Dendritic cell treated with granulocyte-macrophage colony-stimulating factor and Interleukin-4, amounts not matched to agents 40 ng/mL and 50 ng/mL, for 4 days (primary cell): ENCODE measurements at regions of chr5 and their contacts with region 1.

Region 1: GRCh38 chr5:73448463-73449136 is at the start of gene FOXD1:
- H3K4me3 Mint-ChIP-seq: peak within 1 kb of the TSS; percentile 82
- H3K27ac Mint-ChIP-seq: no peak within 1 kb of the TSS
- H3K4me1 Mint-ChIP-seq: peaks cover 39% of the 10 kb centered on the region
- H3K27me3 Mint-ChIP-seq: peaks cover 82% of the 10 kb centered on the region

Region 2: DNA sequence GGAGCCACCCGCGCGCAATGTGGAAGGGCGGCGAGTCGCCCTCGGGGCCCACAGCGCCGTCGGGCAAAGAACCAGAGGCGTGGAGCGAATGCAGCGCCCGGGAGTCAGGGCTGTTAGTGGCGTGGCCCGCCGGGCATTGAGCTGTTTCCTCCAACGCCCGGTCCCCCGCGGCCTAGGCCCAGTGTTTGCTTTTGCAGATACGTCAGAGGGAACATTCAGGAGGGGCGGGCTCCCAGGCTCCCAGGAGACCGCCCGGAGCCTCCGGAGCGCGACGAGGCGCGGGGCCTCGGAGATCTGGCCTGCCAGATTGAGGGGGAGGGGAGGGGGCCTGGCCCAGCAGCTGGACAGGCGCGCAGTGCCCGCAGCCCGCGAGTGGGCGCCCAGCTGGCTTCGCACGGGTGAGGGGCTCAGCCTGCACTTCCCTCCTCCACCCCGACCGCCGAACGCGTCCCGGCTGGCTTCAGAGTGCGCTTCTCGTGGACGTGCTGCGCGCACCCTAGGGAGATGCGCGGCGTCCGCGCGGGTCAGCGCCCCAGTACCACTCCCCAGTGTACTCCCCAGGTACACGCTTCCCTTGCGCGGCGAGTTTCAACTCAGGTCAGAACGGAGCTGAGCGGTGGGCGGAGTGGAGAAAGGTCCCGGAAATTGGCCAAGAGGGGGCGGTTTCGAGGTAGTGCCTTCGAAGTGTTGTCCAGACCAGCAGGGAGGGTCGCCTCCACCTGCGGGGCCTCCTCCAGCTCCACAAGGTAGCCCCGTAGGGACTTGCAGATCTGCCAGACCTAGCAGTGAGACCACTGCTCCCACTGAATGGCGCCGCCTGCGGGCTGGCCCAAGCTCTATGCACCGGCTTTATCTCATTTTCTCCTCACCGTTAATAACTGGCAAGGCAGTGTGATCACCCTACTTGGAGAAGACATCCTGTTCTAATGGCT is 145.2 kb before region 1 on chr5:
- intact Hi-C with region 1: loop called (anchors 10 kb)
- H3K4me3 Mint-ChIP-seq: no peak overlapping the region
- H3K27ac Mint-ChIP-seq: no peak overlapping the region
- H3K4me1 Mint-ChIP-seq: peaks cover 12% of the 10 kb centered on the region
- H3K27me3 Mint-ChIP-seq: peaks cover 96% of the 10 kb centered on the region

Region 3: GRCh38 chr5:73412597-73412988 is 36.0 kb before region 1 on chr5:
- intact Hi-C with region 1: no loop called
- H3K4me3 Mint-ChIP-seq: no peak overlapping the region
- H3K27ac Mint-ChIP-seq: no peak overlapping the region
- H3K4me1 Mint-ChIP-seq: no peaks in the 10 kb centered on the region
- H3K27me3 Mint-ChIP-seq: peaks cover 61% of the 10 kb centered on the region